Naive thymus-derived CD4-positive, alpha-beta T cell (primary cell): ENCODE measurements at regions of chr7 and their contacts with region 1.

Region 1: GRCh38 chr7:150631866-150632864 is at the start of gene GIMAP6:
- DNase-seq: peak in 8 of 9 donors; percentile 37 to 61 (median 44)
- ATAC-seq: peak; percentile 67
- H3K4me3 ChIP-seq: peak within 1 kb of the TSS; percentile 66
- H3K4me3 Mint-ChIP-seq: peak within 1 kb of the TSS; percentile 89 to 99 (median 95)
- H3K27ac ChIP-seq: peak within 1 kb of the TSS; percentile 74
- H3K27ac Mint-ChIP-seq: peak within 1 kb of the TSS; percentile 89 to 99 (median 95)
- H3K4me1 ChIP-seq: peaks cover 48 to 52% of the 10 kb centered on the region in 2 donors
- H3K4me1 Mint-ChIP-seq: peaks cover 54 to 92% (median 84%) of the 10 kb centered on the region in 7 donors
- H3K27me3 ChIP-seq: no peaks in the 10 kb centered on the region
- H3K27me3 Mint-ChIP-seq: no peaks in the 10 kb centered on the region
- total RNA-seq, gene GIMAP6: 40.3 to 173 (median 152) TPM

Region 2: GRCh38 chr7:150556521-150557138 is 75.5 kb before region 1 on chr7:
- CTCF ChIA-PET with region 1: no interaction called
- POLR2A ChIA-PET with region 1: interaction called, 327 read pairs
- intact Hi-C with region 1: no loop called
- DNase-seq: peak in 7 of 9 donors; percentile 45 to 84 (median 73)
- ATAC-seq: peak; percentile 99
- H3K4me3 ChIP-seq: peak overlapping the region; percentile 42
- H3K4me3 Mint-ChIP-seq: peak overlapping the region; percentile 48 to 92 (median 78)
- H3K27ac ChIP-seq: peak overlapping the region; percentile 66
- H3K27ac Mint-ChIP-seq: peak overlapping the region; percentile 89 to 99 (median 94)
- H3K4me1 ChIP-seq: peaks cover 47 to 74% of the 10 kb centered on the region in 2 donors
- H3K4me1 Mint-ChIP-seq: peaks cover 45 to 95% (median 90%) of the 10 kb centered on the region in 7 donors
- H3K27me3 ChIP-seq: no peaks in the 10 kb centered on the region
- H3K27me3 Mint-ChIP-seq: no peaks in the 10 kb centered on the region

Region 3: GRCh38 chr7:150610233-150610632 is 21.9 kb before region 1 on chr7:
- CTCF ChIA-PET with region 1: interaction called, 4 read pairs
- POLR2A ChIA-PET with region 1: interaction called, 11 read pairs
- intact Hi-C with region 1: loop called (anchors 2 kb)
- DNase-seq: no peak
- ATAC-seq: no peak
- H3K4me3 ChIP-seq: no peak overlapping the region
- H3K4me3 Mint-ChIP-seq: peak overlapping the region in 1 of 10 donors; percentile 7
- H3K27ac ChIP-seq: no peak overlapping the region
- H3K27ac Mint-ChIP-seq: peak overlapping the region in 5 of 9 donors; percentile 65 to 91 (median 80)
- H3K4me1 ChIP-seq: peaks cover 14 to 36% of the 10 kb centered on the region in 2 donors
- H3K4me1 Mint-ChIP-seq: peaks cover 46 to 90% (median 75%) of the 10 kb centered on the region in 7 donors
- H3K27me3 ChIP-seq: no peaks in the 10 kb centered on the region
- H3K27me3 Mint-ChIP-seq: no peaks in the 10 kb centered on the region

Region 4: DNA sequence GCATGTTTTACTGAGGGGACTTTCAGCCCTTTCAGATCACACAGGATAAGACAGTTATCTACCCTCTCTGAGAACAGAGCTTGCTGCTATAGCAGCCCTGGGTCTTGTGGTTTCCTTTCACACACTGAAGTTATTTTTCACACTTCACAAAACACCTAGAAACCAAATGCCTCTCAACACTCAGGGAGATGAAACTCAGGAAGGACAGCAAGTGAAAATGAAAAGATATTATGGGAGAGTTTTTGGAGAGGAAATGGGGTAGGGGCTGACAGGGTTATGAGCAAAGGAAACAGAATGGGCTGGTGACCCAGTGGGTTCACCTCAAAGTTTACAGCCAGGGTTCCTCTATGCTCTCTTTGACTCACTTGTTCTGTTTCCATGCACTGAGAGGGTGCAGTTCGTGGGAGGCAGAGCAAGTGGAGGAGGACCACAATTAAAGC is 36.3 kb after region 1 on chr7:
- CTCF ChIA-PET with region 1: interaction called, 4 read pairs
- POLR2A ChIA-PET with region 1: interaction called, 57 read pairs
- intact Hi-C with region 1: loop called (anchors 1 kb)
- DNase-seq: peak in 8 of 9 donors; percentile 66 to 87 (median 81)
- ATAC-seq: peak; percentile 88
- H3K4me3 ChIP-seq: peak overlapping the region; percentile 30
- H3K4me3 Mint-ChIP-seq: peak overlapping the region; percentile 57 to 85 (median 72)
- H3K27ac ChIP-seq: peak overlapping the region; percentile 78
- H3K27ac Mint-ChIP-seq: peak overlapping the region; percentile 73 to 100 (median 97)
- H3K4me1 ChIP-seq: peaks cover 71 to 86% of the 10 kb centered on the region in 2 donors
- H3K4me1 Mint-ChIP-seq: peaks cover 58 to 99% (median 94%) of the 10 kb centered on the region in 7 donors
- H3K27me3 ChIP-seq: no peaks in the 10 kb centered on the region
- H3K27me3 Mint-ChIP-seq: no peaks in the 10 kb centered on the region

Region 5: GRCh38 chr7:150695654-150696053 is 63.5 kb after region 1 on chr7:
- CTCF ChIA-PET with region 1: interaction called, 4 read pairs
- POLR2A ChIA-PET with region 1: interaction called, 96 read pairs
- intact Hi-C with region 1: no loop called
- DNase-seq: no peak
- ATAC-seq: no peak
- H3K4me3 ChIP-seq: no peak overlapping the region
- H3K4me3 Mint-ChIP-seq: no peak overlapping the region
- H3K27ac ChIP-seq: no peak overlapping the region
- H3K27ac Mint-ChIP-seq: peak overlapping the region in 1 of 9 donors; percentile 26
- H3K4me1 ChIP-seq: peaks cover 0 to 3% of the 10 kb centered on the region in 2 donors
- H3K4me1 Mint-ChIP-seq: peaks cover 0 to 25% (median 13%) of the 10 kb centered on the region in 7 donors
- H3K27me3 ChIP-seq: no peaks in the 10 kb centered on the region
- H3K27me3 Mint-ChIP-seq: no peaks in the 10 kb centered on the region

Region 6: DNA sequence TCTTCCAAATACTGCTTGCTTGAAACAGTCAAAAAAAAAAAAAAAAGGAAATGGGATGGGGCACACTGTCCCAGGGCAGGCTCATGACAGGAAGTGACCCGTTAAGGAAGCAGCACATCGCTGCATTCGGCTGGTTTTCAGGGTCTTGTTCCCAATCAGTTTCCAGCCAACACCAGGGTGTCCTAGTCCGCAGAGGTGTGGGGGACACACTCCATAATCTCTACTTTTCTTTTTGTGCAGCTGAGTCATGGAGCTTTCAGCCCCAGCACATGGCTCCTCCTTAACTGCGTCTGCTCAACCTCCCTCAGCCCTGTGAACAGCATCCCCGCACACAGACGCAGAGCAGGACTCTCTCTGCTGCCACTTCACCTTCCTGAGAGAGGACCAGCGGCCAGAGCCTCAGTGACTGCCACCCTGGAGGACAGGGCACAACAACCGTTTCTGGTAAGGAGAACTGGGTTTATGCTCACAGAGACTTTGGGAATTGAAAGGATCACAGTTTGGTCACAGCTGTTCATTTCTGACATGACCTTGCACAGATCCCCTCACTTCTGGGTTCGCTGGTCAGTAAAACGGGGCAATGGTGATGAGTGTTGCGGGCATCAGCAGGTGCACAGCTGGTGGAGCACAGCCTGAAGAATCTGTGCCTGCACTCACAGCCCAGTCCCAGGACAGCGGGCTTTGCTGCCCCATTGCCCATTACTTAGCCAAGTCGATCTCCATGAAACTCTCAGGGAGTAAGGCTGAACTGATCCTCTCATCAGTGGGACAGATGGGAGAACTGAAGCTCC is 105.3 kb after region 1 on chr7 and contains the start of gene GIMAP5:
- CTCF ChIA-PET with region 1: interaction called, 3 read pairs
- POLR2A ChIA-PET with region 1: interaction called, 152 read pairs
- intact Hi-C with region 1: loop called (anchors 2 to 5 kb)
- DNase-seq: peak in 6 of 9 donors; percentile 47 to 57 (median 56)
- ATAC-seq: peak; percentile 79
- H3K4me3 ChIP-seq: peak within 1 kb of the TSS; percentile 84
- H3K4me3 Mint-ChIP-seq: peak within 1 kb of the TSS; percentile 90 to 100 (median 98)
- H3K27ac ChIP-seq: peak within 1 kb of the TSS; percentile 82
- H3K27ac Mint-ChIP-seq: peak within 1 kb of the TSS; percentile 87 to 99 (median 96)
- H3K4me1 ChIP-seq: peaks cover 49 to 56% of the 10 kb centered on the region in 2 donors
- H3K4me1 Mint-ChIP-seq: peaks cover 56 to 73% (median 65%) of the 10 kb centered on the region in 7 donors
- H3K27me3 ChIP-seq: no peaks in the 10 kb centered on the region
- H3K27me3 Mint-ChIP-seq: no peaks in the 10 kb centered on the region
- total RNA-seq, gene GIMAP5: 58.1 to 422 (median 214) TPM